OCI-LY7 (cell line): ENCODE measurements at regions of chr17 and their contacts with region 1.

Region 1: DNA sequence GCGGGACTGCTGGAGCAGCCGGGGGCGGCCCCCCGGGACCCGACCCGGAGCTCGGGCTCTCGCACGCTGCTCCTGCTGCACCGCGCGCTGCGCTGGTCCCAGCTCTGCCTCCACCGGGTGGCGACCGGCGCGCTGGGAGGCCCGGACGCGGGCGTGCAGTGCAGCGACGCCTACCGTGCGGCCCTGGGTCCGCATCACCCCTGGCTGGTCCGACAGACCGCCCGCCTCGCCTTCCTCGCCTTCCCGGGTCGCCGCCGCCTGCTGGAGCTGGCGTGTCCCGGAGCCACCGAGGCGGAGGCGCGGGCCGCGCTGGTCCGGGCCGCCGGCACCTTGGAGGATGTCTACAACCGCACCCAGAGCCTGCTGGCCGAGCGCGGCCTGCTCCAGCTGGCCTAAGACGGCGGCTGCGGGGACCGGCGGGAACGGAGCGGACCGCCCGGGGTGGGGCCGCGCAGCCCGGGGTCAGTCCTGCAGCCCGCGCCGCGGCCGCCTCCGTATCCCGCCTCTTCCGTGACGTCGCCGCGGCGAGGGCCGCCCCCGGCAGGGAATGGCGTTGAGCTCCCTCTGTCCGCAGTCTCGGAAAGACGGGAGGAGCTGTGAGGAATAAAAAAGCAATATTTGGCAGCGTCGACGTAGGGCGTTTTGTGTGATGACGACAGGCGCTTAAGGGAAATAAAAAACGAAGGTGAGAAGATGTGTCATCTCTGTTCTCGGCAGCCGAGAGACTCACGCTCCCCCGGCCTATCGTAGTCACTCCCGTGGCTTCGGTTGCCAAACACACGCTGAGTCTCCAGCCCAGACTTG is 1.3 kb downstream of the GLTPD2 start:
- DNase-seq: peak; percentile 90
- H3K4me3 ChIP-seq: peak overlapping the region; percentile 68
- H3K27ac ChIP-seq: peak overlapping the region; percentile 14
- H3K4me1 ChIP-seq: peaks cover 13% of the 10 kb centered on the region
- CTCF ChIP-seq: peak; percentile 81

Region 2: DNA sequence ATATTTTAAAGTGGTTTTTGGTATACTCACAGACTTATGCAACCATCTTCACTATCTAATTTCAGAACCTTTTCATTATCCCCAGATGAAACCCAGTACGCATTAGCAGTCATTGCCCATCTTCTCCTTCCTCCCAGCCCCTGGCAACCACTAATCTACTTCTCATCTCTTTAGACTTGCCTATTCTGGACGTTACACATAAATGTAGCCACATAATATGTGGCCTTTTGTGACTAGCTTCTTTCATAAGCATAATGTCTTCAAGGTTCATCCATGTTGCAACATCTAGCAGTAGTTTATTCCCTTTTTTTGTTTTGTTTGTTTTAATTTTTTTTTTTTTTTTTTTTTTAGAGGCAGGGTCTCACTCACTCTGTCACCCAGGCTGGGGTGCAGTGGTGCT is 80.8 kb after region 1 on chr17:
- CTCF ChIA-PET with region 1: no interaction called
- POLR2A ChIA-PET with region 1: no interaction called
- intact Hi-C with region 1: no loop called
- DNase-seq: no peak
- H3K4me3 ChIP-seq: no peak overlapping the region
- H3K27ac ChIP-seq: no peak overlapping the region
- H3K4me1 ChIP-seq: no peaks in the 10 kb centered on the region
- CTCF ChIP-seq: no peak

Region 3: DNA sequence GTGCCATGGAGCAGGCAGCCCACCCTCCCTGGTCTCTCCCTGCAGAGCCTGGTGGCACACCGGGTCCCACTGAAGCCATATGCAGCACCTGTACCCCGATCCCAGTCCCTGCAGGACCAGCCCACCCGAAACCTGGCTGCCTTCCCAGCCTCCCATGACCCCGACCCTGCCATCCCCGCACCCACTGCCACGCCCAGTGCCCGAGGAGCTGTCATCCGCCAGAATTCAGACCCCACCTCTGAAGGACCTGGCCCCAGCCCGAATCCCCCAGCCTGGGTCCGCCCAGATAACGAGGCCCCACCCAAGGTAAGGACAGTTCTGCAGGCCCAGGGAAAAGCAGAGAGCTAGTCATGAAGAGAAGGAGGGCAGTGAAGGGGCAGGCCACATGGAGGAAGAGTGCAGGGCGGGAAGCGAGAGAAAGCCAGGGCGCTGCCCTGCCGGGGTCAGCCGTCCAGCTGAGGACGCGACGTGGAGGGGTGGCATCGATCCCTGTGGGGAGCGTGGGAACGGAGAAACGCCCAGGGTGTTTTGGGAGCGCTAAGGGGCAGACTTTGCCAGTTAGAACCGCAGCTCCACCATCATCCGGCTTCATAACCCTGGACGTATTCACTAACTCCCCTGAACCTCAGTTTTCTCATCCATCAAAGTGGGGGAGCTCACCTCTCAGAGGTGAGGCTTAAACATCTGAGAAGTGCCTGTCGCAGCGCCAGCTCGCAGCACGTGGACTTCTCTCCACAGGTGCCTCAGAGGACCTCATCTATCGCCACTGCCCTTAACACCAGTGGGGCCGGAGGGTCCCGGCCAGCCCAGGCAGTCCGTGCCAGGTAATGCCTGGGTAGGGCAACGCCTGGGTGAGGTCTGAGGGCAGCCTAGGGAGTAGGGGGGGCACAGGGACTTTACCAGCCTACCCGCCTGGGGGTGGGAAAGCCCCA is 101.6 kb after region 1 on chr17:
- CTCF ChIA-PET with region 1: no interaction called
- POLR2A ChIA-PET with region 1: no interaction called
- intact Hi-C with region 1: loop called (anchors 2 kb)
- DNase-seq: no peak
- H3K4me3 ChIP-seq: no peak overlapping the region
- H3K27ac ChIP-seq: no peak overlapping the region
- H3K4me1 ChIP-seq: no peaks in the 10 kb centered on the region
- CTCF ChIP-seq: no peak